Colonic mucosa (tissue), 4 donors: ENCODE measurements at regions of chr3 and their contacts with region 1.

Region 1: GRCh38 chr3:19940638-19941037 is 6.3 kb upstream of the RAB5A start:
- DNase-seq: no peak
- H3K4me3 ChIP-seq: no peak overlapping the region
- H3K27ac ChIP-seq: no peak overlapping the region
- H3K4me1 ChIP-seq: no peaks in the 10 kb centered on the region
- H3K27me3 ChIP-seq: no peaks in the 10 kb centered on the region
- CTCF ChIP-seq: no peak

Region 2: DNA sequence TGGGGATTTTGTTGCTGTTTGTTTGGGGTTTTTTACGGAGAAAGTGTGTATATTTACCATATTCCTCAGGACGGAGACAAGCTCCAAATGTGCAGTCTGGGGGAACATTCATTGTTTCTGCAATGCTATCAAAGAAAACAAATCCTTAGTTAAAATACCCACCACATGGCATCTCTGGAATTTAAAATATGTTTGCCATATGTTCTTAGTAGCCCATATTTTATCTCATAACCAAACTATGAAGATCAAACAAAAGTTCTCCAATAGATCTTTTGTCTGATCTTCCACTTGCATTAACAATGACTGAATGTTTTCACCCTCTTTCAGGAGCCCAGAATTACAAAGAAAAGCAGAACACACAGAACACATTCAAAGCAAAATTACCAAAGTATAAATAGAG is 41.9 kb before region 1 on chr3:
- intact Hi-C with region 1: loop called (anchors 5 kb)
- DNase-seq: no peak
- H3K4me3 ChIP-seq: no peak overlapping the region
- H3K27ac ChIP-seq: no peak overlapping the region
- H3K4me1 ChIP-seq: no peaks in the 10 kb centered on the region
- H3K27me3 ChIP-seq: no peaks in the 10 kb centered on the region
- CTCF ChIP-seq: no peak

Region 3: GRCh38 chr3:20846066-20846465 is 905.4 kb after region 1 on chr3:
- intact Hi-C with region 1: no loop called
- DNase-seq: no peak
- H3K4me3 ChIP-seq: no peak overlapping the region
- H3K27ac ChIP-seq: no peak overlapping the region
- H3K4me1 ChIP-seq: no peaks in the 10 kb centered on the region
- H3K27me3 ChIP-seq: no peaks in the 10 kb centered on the region
- CTCF ChIP-seq: no peak